ENCODE measurements at regions of chr18 and their contacts with region 1.

Region 1: DNA sequence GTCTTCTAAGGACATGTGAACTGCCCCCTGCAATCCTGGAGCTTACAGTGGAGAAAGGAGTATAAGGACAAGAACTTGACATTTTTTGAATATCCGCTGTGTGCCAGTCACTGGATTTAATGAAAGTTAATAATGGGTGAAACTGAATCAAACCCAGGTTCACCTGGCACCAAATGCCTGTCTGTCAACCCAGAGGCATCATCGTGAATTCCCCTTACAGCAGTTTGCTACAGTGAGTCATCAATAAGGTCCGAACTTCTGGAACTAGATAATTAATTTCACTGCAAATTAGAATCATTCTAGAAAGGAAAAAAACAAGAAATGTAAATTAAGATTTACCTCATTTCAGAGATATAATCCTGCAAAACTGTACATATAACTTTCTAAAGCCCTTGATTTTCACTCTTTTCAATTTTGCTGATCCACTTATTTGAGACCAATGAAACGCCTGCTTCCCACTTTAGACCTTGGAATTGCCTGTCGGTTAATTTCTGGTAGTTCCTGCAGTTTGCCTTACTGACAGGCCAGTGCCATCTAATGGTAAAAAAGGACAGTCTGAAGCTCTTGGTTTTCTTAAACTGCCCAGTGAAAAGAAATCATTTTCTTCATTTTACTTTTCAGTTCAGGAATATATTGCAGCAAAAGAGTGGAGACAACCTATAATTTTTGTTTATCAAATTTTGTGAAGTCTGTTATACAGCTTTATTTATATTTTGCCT is 8.2 kb downstream of the DSG2 start:
- DNase-seq: peak; percentile 2
- ATAC-seq: no peak
- H3K4me3 ChIP-seq: no peak overlapping the region
- H3K27ac ChIP-seq: no peak overlapping the region
- H3K4me1 ChIP-seq: no peaks in the 10 kb centered on the region; the same call in 1 of the 2 replicates
- H3K27me3 ChIP-seq: no peaks in the 10 kb centered on the region
- CTCF ChIP-seq: peak; percentile 49; the same call in 1 of the 2 replicates

Region 2: GRCh38 chr18:31203096-31203793 is 302.9 kb before region 1 on chr18:
- CTCF ChIA-PET with region 1: no interaction called
- POLR2A ChIA-PET with region 1: no interaction called
- in situ Hi-C with region 1: no loop called
- intact Hi-C with region 1: no loop called
- DNase-seq: no peak
- ATAC-seq: no peak
- H3K4me3 ChIP-seq: no peak overlapping the region
- H3K27ac ChIP-seq: no peak overlapping the region
- H3K4me1 ChIP-seq: no peaks in the 10 kb centered on the region
- H3K27me3 ChIP-seq: no peaks in the 10 kb centered on the region
- CTCF ChIP-seq: no peak

Region 3: GRCh38 chr18:31424383-31424988 is 81.7 kb before region 1 on chr18:
- CTCF ChIA-PET with region 1: interaction called, 11 read pairs
- POLR2A ChIA-PET with region 1: no interaction called
- in situ Hi-C with region 1: no loop called
- intact Hi-C with region 1: loop called (anchors 10 kb)
- DNase-seq: peak; percentile 18
- ATAC-seq: no peak
- H3K4me3 ChIP-seq: no peak overlapping the region
- H3K27ac ChIP-seq: no peak overlapping the region
- H3K4me1 ChIP-seq: no peaks in the 10 kb centered on the region
- H3K27me3 ChIP-seq: no peaks in the 10 kb centered on the region
- CTCF ChIP-seq: peak; percentile 77